Naive thymus-derived CD4-positive, alpha-beta T cell (primary cell): ENCODE measurements at regions of chr3 and their contacts with region 1.

Region 1: GRCh38 chr3:184362668-184363540 is 1.4 kb downstream of the POLR2H start:
- DNase-seq: peak; percentile 74 to 94 (median 90)
- ATAC-seq: peak; percentile 87
- H3K4me3 ChIP-seq: peak overlapping the region; percentile 97
- H3K4me3 Mint-ChIP-seq: peak overlapping the region; percentile 95 to 100 (median 99)
- H3K27ac ChIP-seq: peak overlapping the region; percentile 84
- H3K27ac Mint-ChIP-seq: peak overlapping the region; percentile 91 to 98 (median 97)
- H3K4me1 ChIP-seq: peaks cover 11 to 13% of the 10 kb centered on the region in 2 donors
- H3K4me1 Mint-ChIP-seq: peaks cover 25 to 37% (median 30%) of the 10 kb centered on the region in 7 donors
- H3K27me3 ChIP-seq: no peaks in the 10 kb centered on the region
- H3K27me3 Mint-ChIP-seq: peaks cover 0 to 13% (median 0%) of the 10 kb centered on the region in 5 donors

Region 2: DNA sequence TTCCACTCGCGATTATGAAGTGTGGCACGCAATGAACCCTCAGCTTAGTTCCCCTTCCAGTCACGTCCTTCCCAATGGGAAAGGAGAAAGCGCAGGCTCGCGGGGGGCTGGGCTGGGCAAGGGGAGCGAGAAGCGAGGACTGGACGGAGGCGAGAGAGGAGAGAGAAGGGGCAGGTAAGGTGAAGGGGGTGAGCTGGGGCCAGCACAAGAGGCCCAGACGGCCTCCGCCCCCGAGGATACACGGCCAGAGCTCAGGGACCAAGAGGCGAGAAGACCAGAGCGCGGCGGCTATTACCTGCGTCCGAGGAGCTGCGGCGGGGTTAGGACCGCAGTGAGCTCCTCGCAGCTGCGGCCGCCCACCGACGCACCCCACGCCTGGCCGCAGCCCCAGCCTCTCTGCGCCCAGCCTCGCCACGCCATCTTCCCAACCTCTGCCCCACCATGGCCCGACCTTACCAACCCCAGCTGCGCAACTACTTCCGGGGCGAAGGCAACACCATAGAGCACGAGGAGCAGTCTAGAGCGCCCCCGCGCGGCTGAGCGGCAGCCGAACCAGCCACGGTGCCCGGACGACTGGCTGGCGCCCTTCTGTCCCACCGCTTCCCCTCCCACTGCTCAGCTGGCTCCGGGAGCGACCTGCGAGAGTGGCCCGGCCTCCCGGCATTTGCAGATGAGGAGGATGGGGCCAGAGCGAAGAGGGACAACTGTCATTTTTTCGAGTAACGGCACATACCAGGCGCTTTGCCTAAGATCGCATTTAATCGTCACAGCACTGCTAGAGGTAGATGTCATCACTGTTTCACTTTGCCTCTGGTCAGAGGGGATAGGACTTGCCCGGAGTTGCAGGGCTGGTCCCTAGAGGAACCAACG is 478.2 kb before region 1 on chr3 and contains the start of gene PARL:
- CTCF ChIA-PET with region 1: no interaction called
- POLR2A ChIA-PET with region 1: no interaction called
- intact Hi-C with region 1: loop called (anchors 1 to 10 kb)
- DNase-seq: peak; percentile 88 to 99 (median 95)
- ATAC-seq: peak; percentile 100
- H3K4me3 ChIP-seq: peak within 1 kb of the TSS; percentile 85
- H3K4me3 Mint-ChIP-seq: peak within 1 kb of the TSS; percentile 89 to 98 (median 96)
- H3K27ac ChIP-seq: peak within 1 kb of the TSS; percentile 77
- H3K27ac Mint-ChIP-seq: peak within 1 kb of the TSS; percentile 86 to 96 (median 93)
- H3K4me1 ChIP-seq: peaks cover 15% of the 10 kb centered on the region in 2 donors
- H3K4me1 Mint-ChIP-seq: peaks cover 15 to 53% (median 41%) of the 10 kb centered on the region in 7 donors
- H3K27me3 ChIP-seq: no peaks in the 10 kb centered on the region
- H3K27me3 Mint-ChIP-seq: peaks cover 0 to 3% (median 0%) of the 10 kb centered on the region in 5 donors
- total RNA-seq, gene PARL: 41.6 to 50.4 (median 47.1) TPM

Region 3: DNA sequence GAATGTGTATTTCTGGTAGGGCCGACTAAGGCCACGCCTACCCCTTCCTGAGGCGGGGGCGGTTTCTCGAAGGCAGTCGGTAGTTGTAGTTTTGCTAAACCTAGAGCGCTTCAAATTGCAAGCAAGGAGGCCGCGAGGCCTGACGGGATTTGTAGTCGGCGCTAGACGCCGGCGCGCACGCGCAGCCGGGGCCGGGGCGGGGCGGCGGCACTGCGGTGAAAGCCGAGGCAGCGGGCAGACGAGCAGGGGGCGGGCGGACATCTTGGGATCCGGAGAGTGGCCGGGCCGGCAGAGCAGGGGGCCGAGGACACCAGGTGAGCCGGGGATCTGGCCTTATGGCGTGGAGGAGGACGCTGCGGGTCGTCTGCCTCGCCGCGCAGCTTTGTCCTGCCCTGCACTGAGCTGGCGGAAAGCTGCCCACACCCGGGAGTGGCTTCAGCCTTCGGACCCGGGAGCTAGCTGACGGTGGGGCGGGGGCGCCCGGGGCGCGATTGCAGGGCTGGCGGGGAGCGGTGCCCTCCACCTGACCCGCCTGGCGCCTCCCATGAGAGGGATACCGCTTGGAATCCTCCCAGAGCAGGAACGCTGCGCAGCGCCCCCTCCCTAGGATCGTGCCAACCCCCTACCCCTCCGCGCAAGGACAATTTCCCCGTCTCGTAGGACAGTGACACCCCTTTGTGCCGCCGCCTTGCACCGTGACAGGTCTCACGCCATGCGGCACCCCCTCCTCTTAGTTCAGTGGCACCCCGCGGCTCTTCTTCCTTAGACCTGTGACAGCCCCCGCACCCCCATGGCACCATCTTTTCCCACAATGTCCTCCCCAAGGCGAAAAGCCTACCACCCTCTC is 188.0 kb before region 1 on chr3 and contains the start of gene AP2M1:
- CTCF ChIA-PET with region 1: no interaction called
- POLR2A ChIA-PET with region 1: no interaction called
- intact Hi-C with region 1: loop called in 1 of 2 experiments (anchors 1 kb)
- DNase-seq: peak; percentile 98 to 99 (median 98)
- ATAC-seq: peak; percentile 98
- H3K4me3 ChIP-seq: peak within 1 kb of the TSS; percentile 82
- H3K4me3 Mint-ChIP-seq: peak within 1 kb of the TSS; percentile 89 to 98 (median 96)
- H3K27ac ChIP-seq: peak within 1 kb of the TSS; percentile 95
- H3K27ac Mint-ChIP-seq: peak within 1 kb of the TSS; percentile 75 to 94 (median 90)
- H3K4me1 ChIP-seq: peaks cover 18 to 20% of the 10 kb centered on the region in 2 donors
- H3K4me1 Mint-ChIP-seq: peaks cover 14 to 46% (median 38%) of the 10 kb centered on the region in 7 donors
- H3K27me3 ChIP-seq: no peaks in the 10 kb centered on the region
- H3K27me3 Mint-ChIP-seq: no peaks in the 10 kb centered on the region
- total RNA-seq, gene AP2M1: 111 to 217 (median 185) TPM

Region 4: GRCh38 chr3:184314363-184314699 is 48.6 kb before region 1 on chr3 and contains the start of gene EIF4G1:
- CTCF ChIA-PET with region 1: no interaction called
- POLR2A ChIA-PET with region 1: no interaction called
- intact Hi-C with region 1: loop called (anchors 1 kb)
- DNase-seq: peak; percentile 89 to 95 (median 91)
- ATAC-seq: peak; percentile 95
- H3K4me3 ChIP-seq: peak within 1 kb of the TSS; percentile 73
- H3K4me3 Mint-ChIP-seq: peak within 1 kb of the TSS; percentile 79 to 94 (median 88)
- H3K27ac ChIP-seq: peak within 1 kb of the TSS; percentile 93
- H3K27ac Mint-ChIP-seq: peak within 1 kb of the TSS; percentile 68 to 95 (median 89)
- H3K4me1 ChIP-seq: peaks cover 0 to 17% of the 10 kb centered on the region in 2 donors
- H3K4me1 Mint-ChIP-seq: peaks cover 15 to 35% (median 28%) of the 10 kb centered on the region in 7 donors
- H3K27me3 ChIP-seq: no peaks in the 10 kb centered on the region
- H3K27me3 Mint-ChIP-seq: no peaks in the 10 kb centered on the region
- total RNA-seq, gene EIF4G1: 200 to 341 (median 256) TPM

Region 5: DNA sequence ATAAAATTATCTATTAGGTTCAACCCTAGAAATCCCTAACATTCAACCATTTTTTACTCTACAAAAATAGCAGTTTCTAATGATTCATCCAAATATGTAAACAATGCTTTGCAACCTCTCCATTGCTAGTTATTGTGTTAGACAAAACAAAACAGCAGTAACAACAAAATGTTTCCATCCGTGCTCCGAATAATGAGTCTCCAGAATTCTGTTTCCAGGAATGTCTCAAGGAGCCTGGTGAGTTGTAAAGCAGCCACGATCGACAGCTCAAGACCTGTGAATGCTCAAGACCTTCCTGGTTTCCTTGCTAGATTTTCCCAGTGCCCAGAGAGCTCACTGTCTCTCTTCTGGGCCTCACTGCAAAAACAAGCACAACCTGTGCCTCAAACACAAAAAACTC is 66.9 kb after region 1 on chr3:
- CTCF ChIA-PET with region 1: no interaction called
- POLR2A ChIA-PET with region 1: no interaction called
- intact Hi-C with region 1: no loop called
- DNase-seq: no peak
- ATAC-seq: no peak
- H3K4me3 ChIP-seq: no peak overlapping the region
- H3K4me3 Mint-ChIP-seq: no peak overlapping the region
- H3K27ac ChIP-seq: no peak overlapping the region
- H3K27ac Mint-ChIP-seq: no peak overlapping the region
- H3K4me1 ChIP-seq: no peaks in the 10 kb centered on the region
- H3K4me1 Mint-ChIP-seq: no peaks in the 10 kb centered on the region
- H3K27me3 ChIP-seq: no peaks in the 10 kb centered on the region
- H3K27me3 Mint-ChIP-seq: peaks cover 0 to 14% (median 8%) of the 10 kb centered on the region in 5 donors

Region 6: DNA sequence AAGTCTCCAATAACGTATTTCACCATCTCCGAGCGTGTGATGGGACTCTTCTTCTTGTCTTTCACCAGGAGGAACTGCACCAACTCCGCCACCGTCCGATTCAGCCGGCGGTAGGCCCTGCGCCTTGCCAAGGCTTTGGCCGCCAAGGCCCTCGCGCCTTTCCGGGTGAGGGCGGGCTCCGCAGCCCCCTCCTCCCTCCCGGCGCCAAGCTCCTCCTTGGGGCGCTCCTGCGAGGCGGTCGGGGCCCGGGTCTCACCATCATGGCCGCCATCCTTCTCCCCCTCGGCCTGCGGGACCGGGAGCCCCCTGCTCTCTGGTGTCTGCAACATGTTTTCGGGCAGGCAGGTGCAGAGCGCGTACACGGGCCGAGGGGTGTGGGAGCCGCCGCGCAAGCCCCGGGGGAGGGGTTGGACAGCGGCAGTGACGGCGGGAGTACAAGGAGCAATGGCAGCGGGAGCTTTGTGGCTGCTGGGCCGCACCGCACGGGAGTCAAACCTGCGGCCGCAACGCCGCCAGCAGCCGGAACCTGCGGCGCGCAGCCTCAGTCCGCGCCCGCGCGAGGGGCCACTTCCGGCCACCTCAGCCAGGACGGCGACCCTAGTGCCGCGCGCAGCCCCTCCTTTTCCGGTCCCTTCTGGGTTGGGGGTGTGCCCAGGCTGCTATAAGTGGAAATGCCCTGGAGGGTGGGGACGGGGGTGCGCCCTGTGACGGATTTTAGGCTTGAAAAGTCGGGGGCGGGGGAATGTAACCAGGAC is 348.8 kb after region 1 on chr3 and contains the start of gene MAGEF1:
- CTCF ChIA-PET with region 1: no interaction called
- POLR2A ChIA-PET with region 1: no interaction called
- intact Hi-C with region 1: loop called (anchors 5 kb)
- DNase-seq: peak; percentile 34 to 78 (median 69)
- ATAC-seq: peak; percentile 87
- H3K4me3 ChIP-seq: peak within 1 kb of the TSS; percentile 70
- H3K4me3 Mint-ChIP-seq: peak within 1 kb of the TSS; percentile 81 to 99 (median 93)
- H3K27ac ChIP-seq: peak within 1 kb of the TSS; percentile 77
- H3K27ac Mint-ChIP-seq: peak within 1 kb of the TSS; percentile 69 to 99 (median 87)
- H3K4me1 ChIP-seq: peaks cover 10 to 17% of the 10 kb centered on the region in 2 donors
- H3K4me1 Mint-ChIP-seq: peaks cover 28 to 44% (median 34%) of the 10 kb centered on the region in 7 donors
- H3K27me3 ChIP-seq: no peaks in the 10 kb centered on the region
- H3K27me3 Mint-ChIP-seq: peaks cover 0 to 20% (median 0%) of the 10 kb centered on the region in 5 donors
- total RNA-seq, gene MAGEF1: 9.0 to 17.4 (median 13.3) TPM

Region 7: DNA sequence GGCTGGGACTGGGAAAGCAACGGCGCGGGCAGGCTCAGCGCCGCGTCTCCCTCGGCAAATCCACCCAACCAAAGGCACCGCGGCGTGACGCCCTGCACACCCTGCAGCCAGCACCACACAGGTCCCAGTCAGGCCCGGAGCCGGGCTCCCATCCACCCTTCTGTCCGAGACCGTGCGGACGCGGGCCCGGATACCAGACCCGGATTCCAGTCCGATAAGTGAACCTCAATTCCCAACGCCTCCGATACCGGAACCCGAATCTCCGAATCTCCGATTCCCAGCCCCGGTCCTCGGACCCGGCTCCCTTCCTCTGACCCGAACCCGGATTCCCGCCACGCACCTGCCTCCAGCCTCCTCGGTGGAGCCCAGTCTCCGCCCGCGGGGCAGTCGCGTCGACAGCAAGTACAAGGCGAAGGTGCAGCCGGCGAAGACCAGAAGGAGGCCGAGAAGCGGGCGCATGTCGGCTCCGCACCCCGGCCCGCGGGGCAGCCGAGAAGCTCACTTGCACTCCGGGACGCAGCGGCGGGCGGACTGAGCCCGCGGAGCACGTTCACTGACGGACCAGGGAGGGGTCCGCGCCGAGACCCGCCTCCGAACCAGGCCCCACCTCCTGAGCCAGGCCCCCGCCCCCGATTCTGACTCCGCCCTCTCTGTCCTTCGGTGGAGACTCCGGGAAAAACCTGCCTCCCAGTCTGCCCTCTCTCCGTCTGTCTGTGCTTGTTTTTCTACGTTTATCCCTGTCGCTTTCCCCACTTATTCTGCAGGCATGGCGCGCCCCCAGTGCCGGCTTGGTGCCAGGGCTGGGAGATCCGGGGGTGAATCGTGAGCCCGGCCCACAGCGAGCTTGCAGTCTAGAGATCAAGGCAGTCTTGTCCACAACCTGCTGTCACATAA is 1135.8 kb after region 1 on chr3 and contains the start of gene TMEM41A:
- CTCF ChIA-PET with region 1: no interaction called
- POLR2A ChIA-PET with region 1: no interaction called
- intact Hi-C with region 1: loop called in 1 of 2 experiments (anchors 10 kb)
- DNase-seq: peak; percentile 80 to 94 (median 88)
- ATAC-seq: peak; percentile 99
- H3K4me3 ChIP-seq: peak within 1 kb of the TSS; percentile 93
- H3K4me3 Mint-ChIP-seq: peak within 1 kb of the TSS; percentile 87 to 98 (median 96)
- H3K27ac ChIP-seq: peak within 1 kb of the TSS; percentile 76
- H3K27ac Mint-ChIP-seq: peak within 1 kb of the TSS; percentile 87 to 95 (median 90)
- H3K4me1 ChIP-seq: peaks cover 17 to 24% of the 10 kb centered on the region in 2 donors
- H3K4me1 Mint-ChIP-seq: peaks cover 6 to 40% (median 29%) of the 10 kb centered on the region in 7 donors
- H3K27me3 ChIP-seq: no peaks in the 10 kb centered on the region
- H3K27me3 Mint-ChIP-seq: peaks cover 0 to 10% (median 0%) of the 10 kb centered on the region in 5 donors
- total RNA-seq, gene TMEM41A: 23.7 to 30.5 (median 29.1) TPM